GM12878 (cell line): ENCODE measurements at regions of chr9 and their contacts with region 1.

Region 1: GRCh38 chr9:23571414-23572104 is 254.5 kb downstream of the ELAVL2 start:
- DNase-seq: no peak
- ATAC-seq: peak; percentile 91
- H3K4me3 ChIP-seq: no peak overlapping the region
- H3K27ac ChIP-seq: no peak overlapping the region
- H3K4me1 ChIP-seq: no peaks in the 10 kb centered on the region
- H3K27me3 ChIP-seq: no peaks in the 10 kb centered on the region
- CTCF ChIP-seq: no peak
- EP300 ChIP-seq: no peak
- POLR2A ChIP-seq: no peak
- RAD21 ChIP-seq: no peak

Region 2: DNA sequence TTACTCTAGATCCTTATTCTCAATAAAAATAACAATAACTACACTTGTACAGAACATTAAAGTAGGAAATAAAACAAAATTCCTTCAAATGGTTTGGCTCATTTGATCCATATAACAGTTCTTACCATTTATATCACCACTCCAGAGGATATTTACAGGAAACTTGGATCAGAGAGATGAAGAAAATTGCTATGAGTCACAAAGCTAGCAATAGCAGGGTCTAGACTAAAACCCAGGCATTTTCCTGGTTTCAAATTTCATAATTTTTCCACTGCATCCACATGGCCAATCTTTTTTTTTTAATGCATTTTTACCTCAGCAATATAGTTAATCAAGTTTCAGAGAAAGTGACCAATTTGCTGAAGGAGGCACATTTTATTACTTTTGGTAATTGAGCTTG is 44.8 kb before region 1 on chr9:
- CTCF ChIA-PET with region 1: no interaction called
- POLR2A ChIA-PET with region 1: no interaction called
- RAD21 ChIA-PET with region 1: no interaction called
- SMC1A ChIA-PET with region 1: no interaction called
- in situ Hi-C with region 1: no loop called
- intact Hi-C with region 1: no loop called
- DNase-seq: no peak
- ATAC-seq: no peak
- H3K4me3 ChIP-seq: no peak overlapping the region
- H3K27ac ChIP-seq: no peak overlapping the region
- H3K4me1 ChIP-seq: no peaks in the 10 kb centered on the region
- H3K27me3 ChIP-seq: no peaks in the 10 kb centered on the region
- CTCF ChIP-seq: no peak
- EP300 ChIP-seq: no peak
- POLR2A ChIP-seq: no peak
- RAD21 ChIP-seq: no peak

Region 3: GRCh38 chr9:23587433-23587832 is 15.9 kb after region 1 on chr9:
- CTCF ChIA-PET with region 1: interaction called, 4 read pairs
- POLR2A ChIA-PET with region 1: no interaction called
- RAD21 ChIA-PET with region 1: interaction called, 7 read pairs
- SMC1A ChIA-PET with region 1: interaction called, 5 read pairs
- in situ Hi-C with region 1: no loop called
- intact Hi-C with region 1: loop called (anchors 1 kb)
- DNase-seq: no peak
- ATAC-seq: peak; percentile 47
- H3K4me3 ChIP-seq: no peak overlapping the region
- H3K27ac ChIP-seq: no peak overlapping the region
- H3K4me1 ChIP-seq: no peaks in the 10 kb centered on the region
- H3K27me3 ChIP-seq: no peaks in the 10 kb centered on the region
- CTCF ChIP-seq: no peak
- EP300 ChIP-seq: no peak
- POLR2A ChIP-seq: no peak
- RAD21 ChIP-seq: no peak

Region 4: GRCh38 chr9:23648651-23649050 is 77.1 kb after region 1 on chr9:
- CTCF ChIA-PET with region 1: no interaction called
- POLR2A ChIA-PET with region 1: no interaction called
- RAD21 ChIA-PET with region 1: no interaction called
- SMC1A ChIA-PET with region 1: no interaction called
- in situ Hi-C with region 1: no loop called
- intact Hi-C with region 1: no loop called
- DNase-seq: no peak
- ATAC-seq: no peak
- H3K4me3 ChIP-seq: no peak overlapping the region
- H3K27ac ChIP-seq: no peak overlapping the region
- H3K4me1 ChIP-seq: no peaks in the 10 kb centered on the region
- H3K27me3 ChIP-seq: no peaks in the 10 kb centered on the region
- CTCF ChIP-seq: no peak
- EP300 ChIP-seq: no peak
- POLR2A ChIP-seq: no peak
- RAD21 ChIP-seq: no peak